IMR-90 (cell line): ENCODE measurements at regions of chr3 and their contacts with region 1.

Region 1: DNA sequence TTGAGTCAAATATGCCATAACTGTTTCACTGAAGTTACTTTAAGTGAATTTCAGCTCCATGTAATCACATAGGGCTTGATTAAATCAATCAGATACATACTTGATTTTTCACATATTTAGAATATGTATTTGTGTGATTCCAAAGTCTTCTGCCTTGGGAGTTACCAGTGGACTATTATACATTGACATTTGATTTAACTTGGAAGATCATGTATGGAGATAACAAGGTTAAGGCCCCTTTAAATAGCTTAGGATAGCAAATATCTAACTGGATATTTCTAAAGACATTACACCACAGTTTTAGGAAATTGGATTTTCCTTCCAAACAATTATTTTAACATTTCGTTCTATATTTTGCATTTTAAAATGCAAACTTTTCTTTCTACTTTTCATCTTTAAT is 405.0 kb downstream of the RAP2B start:
- DNase-seq: no peak
- ATAC-seq: no peak
- H3K4me3 ChIP-seq: no peak overlapping the region
- H3K27ac ChIP-seq: no peak overlapping the region
- H3K4me1 ChIP-seq: no peaks in the 10 kb centered on the region
- H3K27me3 ChIP-seq: no peaks in the 10 kb centered on the region
- CTCF ChIP-seq: no peak
- POLR2A ChIP-seq: no peak
- RAD21 ChIP-seq: no peak

Region 2: DNA sequence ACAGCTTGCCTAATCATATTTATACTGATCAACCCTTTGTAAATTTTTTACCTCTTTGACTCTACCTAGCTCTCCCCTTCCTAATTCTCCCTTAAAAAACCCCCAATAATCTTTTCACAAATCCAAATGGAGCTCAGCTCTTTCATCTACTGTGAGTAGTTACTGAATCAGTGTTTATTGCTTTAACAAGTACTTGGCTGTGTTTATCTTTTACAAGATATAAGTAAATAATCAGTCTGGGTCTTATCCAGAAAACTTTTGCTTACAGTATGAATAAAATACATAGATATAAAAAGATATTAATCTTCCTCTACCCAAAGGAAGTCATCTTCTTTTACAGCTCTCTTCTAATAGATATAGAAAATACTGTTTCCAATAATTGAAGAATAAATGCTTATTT is 38.5 kb before region 1 on chr3:
- CTCF ChIA-PET with region 1: interaction called, 11 read pairs
- POLR2A ChIA-PET with region 1: no interaction called
- dilution Hi-C with region 1: no loop called
- in situ Hi-C with region 1: no loop called
- intact Hi-C with region 1: no loop called
- DNase-seq: no peak
- ATAC-seq: no peak
- H3K4me3 ChIP-seq: no peak overlapping the region
- H3K27ac ChIP-seq: no peak overlapping the region
- H3K4me1 ChIP-seq: no peaks in the 10 kb centered on the region
- H3K27me3 ChIP-seq: no peaks in the 10 kb centered on the region
- CTCF ChIP-seq: no peak
- POLR2A ChIP-seq: no peak
- RAD21 ChIP-seq: no peak